Activated CD4-positive, alpha-beta T cell treated with anti-CD3 and anti-CD28 coated beads, Interleukin-2, amount 10 ng/mL, durations not matched to agents 24 days and 14 days (primary cell): ENCODE measurements at regions of chr1 and their contacts with region 1.

Region 1: GRCh38 chr1:190785811-190786210 is 308.1 kb upstream of the BRINP3 start:
- DNase-seq: no peak
- H3K4me3 Mint-ChIP-seq: no peak overlapping the region
- H3K27ac Mint-ChIP-seq: no peak overlapping the region
- H3K4me1 Mint-ChIP-seq: no peaks in the 10 kb centered on the region
- H3K27me3 Mint-ChIP-seq: no peaks in the 10 kb centered on the region

Region 2: DNA sequence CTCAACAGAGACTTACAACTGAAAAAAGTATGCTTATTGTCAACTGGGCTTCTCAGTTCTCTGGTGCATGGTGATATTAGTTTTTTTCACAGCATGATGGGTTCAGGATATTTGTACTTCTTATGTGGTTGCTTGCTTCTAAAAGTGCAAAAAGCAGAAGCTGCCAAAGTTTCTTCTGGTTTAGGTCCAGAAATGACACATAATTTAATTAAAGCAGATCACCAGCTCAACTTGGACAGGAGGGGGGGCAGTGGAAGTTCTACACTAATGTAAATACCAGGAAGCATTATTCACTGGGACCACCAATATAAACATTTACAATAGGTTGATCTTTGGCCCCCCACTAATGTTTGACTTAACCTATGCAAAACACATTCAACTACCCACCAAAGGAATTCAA is 46.7 kb after region 1 on chr1:
- intact Hi-C with region 1: loop called (anchors 5 kb)
- DNase-seq: no peak
- H3K4me3 Mint-ChIP-seq: no peak overlapping the region
- H3K27ac Mint-ChIP-seq: no peak overlapping the region
- H3K4me1 Mint-ChIP-seq: no peaks in the 10 kb centered on the region
- H3K27me3 Mint-ChIP-seq: no peaks in the 10 kb centered on the region